Heart right ventricle (tissue), 16 donors: ENCODE measurements at regions of chr7 and their contacts with region 1.

Region 1: DNA sequence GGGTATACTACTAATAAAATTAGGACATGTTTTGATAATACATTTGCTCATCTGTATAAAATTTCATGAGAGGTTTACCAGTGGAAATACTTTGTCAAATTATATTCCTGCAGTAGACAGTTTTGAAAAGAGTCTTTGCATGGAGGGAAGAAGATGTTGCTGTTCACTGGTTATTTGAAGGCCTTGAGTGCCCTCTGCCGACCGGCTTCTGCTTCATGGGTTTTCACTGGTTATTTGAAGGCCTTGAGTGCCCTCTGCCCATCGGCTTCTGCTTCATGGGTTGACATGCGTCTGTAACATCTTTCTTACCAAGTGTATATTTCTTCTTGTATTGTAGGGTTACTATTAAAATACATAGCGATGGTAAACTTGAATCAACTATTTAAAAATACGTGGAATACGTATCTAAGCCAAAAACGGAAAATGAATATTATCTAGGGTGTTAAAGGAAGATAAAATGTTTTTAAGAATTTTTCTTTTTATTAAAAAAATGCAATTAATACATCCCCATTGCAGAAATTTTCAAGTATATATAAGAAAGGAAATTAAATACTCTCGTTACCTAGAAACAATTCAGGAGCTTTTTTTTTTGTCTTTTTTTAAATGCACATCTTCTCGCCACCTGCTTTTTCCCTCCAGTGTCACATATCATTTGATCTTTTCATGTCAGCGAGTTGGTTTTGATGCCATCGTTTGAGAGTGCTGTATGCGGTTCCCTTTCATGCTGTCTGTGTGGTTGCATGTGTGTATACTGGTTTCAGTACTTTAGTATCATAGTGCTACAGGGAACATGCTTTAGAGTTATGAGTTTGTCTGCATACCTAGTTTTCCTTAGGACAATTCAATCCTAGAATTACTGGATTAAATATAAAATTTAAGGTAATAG is 73.4 kb downstream of the SHH start:
- DNase-seq: peak; percentile 61 to 69
- ATAC-seq: peak in 6 of 8 donors; percentile 65 to 85 (median 80)
- H3K4me3 ChIP-seq: no peak overlapping the region
- H3K27ac ChIP-seq: no peak overlapping the region
- H3K4me1 ChIP-seq: peaks cover 0 to 8% (median 0%) of the 10 kb centered on the region in 9 donors
- H3K27me3 ChIP-seq: no peaks in the 10 kb centered on the region
- CTCF ChIP-seq: peak; percentile 25 to 77 (median 65)

Region 2: GRCh38 chr7:155380221-155380861 is 358.6 kb before region 1 on chr7:
- intact Hi-C with region 1: loop called in 1 of 10 experiments (anchors 10 kb)
- DNase-seq: peak; percentile 53 to 60
- ATAC-seq: peak; percentile 57 to 86 (median 77)
- H3K4me3 ChIP-seq: no peak overlapping the region
- H3K27ac ChIP-seq: no peak overlapping the region
- H3K4me1 ChIP-seq: peaks cover 0 to 48% (median 40%) of the 10 kb centered on the region in 9 donors
- H3K27me3 ChIP-seq: peaks cover 59 to 100% (median 99%) of the 10 kb centered on the region in 7 donors
- CTCF ChIP-seq: peak; percentile 37 to 83 (median 72)

Region 3: GRCh38 chr7:155598810-155599210 is 140.1 kb before region 1 on chr7:
- intact Hi-C with region 1: loop called in 9 of 10 experiments (anchors 1 to 5 kb)
- DNase-seq: peak; percentile 73 to 82
- ATAC-seq: peak in 6 of 8 donors; percentile 55 to 82 (median 74)
- H3K4me3 ChIP-seq: no peak overlapping the region
- H3K27ac ChIP-seq: no peak overlapping the region
- H3K4me1 ChIP-seq: peaks cover 0 to 5% (median 0%) of the 10 kb centered on the region in 9 donors
- H3K27me3 ChIP-seq: peaks cover 0 to 52% (median 26%) of the 10 kb centered on the region in 7 donors
- CTCF ChIP-seq: peak; percentile 92 to 99 (median 98)

Region 4: DNA sequence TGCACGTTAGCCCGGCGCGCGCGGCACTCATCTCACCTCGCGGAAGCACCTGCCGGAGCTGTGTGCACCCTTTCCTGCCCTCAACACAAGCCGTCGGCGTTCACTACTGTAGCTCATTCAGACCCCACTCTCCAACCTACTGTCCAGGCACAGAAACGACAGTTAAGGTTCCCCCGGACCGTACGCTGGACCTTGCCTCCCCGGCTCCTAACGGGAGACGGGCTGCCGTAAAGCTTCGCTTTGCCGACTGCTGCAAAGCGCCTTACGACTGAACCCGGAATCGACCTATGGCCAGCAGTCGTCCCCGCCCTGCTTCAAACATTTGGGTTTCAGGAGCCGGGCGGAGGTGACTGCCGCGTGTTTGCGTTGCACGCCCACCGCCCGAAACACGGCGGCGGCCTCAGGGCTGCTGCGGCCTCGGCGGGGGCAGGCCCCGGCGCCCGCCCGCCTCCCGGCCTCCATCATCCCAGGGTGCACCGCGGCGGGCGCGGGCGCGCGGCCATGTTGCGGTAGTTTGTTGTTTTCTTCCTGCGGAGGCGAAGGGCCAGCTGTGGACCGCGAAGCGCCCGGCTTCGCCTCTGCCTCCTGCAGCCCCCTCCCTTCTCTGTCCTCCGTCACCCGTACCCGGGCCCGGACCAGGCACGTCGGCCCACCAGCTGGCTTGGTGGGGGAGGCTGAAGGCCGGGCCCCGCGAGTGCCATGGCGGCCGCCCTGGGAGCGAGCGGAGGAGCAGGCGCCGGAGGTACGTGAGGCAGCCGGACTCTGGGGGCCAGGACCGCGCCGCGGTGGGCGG is 94.5 kb before region 1 on chr7 and contains the start of gene RBM33:
- intact Hi-C with region 1: loop called in 3 of 10 experiments (anchors 10 kb)
- DNase-seq: peak; percentile 75
- ATAC-seq: peak; percentile 92 to 96 (median 94)
- H3K4me3 ChIP-seq: peak within 1 kb of the TSS; percentile 74 to 99 (median 93)
- H3K27ac ChIP-seq: peak within 1 kb of the TSS; percentile 80 to 99 (median 95)
- H3K4me1 ChIP-seq: peaks cover 0 to 35% (median 27%) of the 10 kb centered on the region in 9 donors
- H3K27me3 ChIP-seq: no peaks in the 10 kb centered on the region
- CTCF ChIP-seq: no peak
- total RNA-seq, gene RBM33: 30.5 to 44.6 (median 36.0) TPM